ENCODE measurements at regions of chr1 and their contacts with region 1.

Region 1: GRCh38 chr1:33367485-33368405 is 46.8 kb upstream of the A3GALT2 start:
- DNase-seq: peak; percentile 92 to 94
- H3K4me3 ChIP-seq: no peak overlapping the region
- H3K27ac ChIP-seq: peak overlapping the region in 4 of 5 donors; percentile 7 to 84 (median 60)
- H3K4me1 ChIP-seq: peaks cover 24 to 57% (median 52%) of the 10 kb centered on the region in 4 donors
- H3K27me3 ChIP-seq: no peaks in the 10 kb centered on the region
- CTCF ChIP-seq: peak in 6 of 7 experiments; percentile 31 to 97 (median 95)
- EP300 ChIP-seq: no peak
- POLR2A ChIP-seq: no peak

Region 2: GRCh38 chr1:33295450-33296081 is 72.2 kb before region 1 on chr1:
- intact Hi-C with region 1: loop called (anchors 2 kb)
- DNase-seq: peak; percentile 93 to 95
- H3K4me3 ChIP-seq: no peak overlapping the region
- H3K27ac ChIP-seq: peak overlapping the region in 3 of 5 donors; percentile 15 to 67 (median 37)
- H3K4me1 ChIP-seq: peaks cover 7 to 47% (median 19%) of the 10 kb centered on the region in 4 donors
- H3K27me3 ChIP-seq: no peaks in the 10 kb centered on the region
- CTCF ChIP-seq: peak in 6 of 7 experiments; percentile 95 to 99 (median 98)
- EP300 ChIP-seq: no peak
- POLR2A ChIP-seq: no peak

Region 3: DNA sequence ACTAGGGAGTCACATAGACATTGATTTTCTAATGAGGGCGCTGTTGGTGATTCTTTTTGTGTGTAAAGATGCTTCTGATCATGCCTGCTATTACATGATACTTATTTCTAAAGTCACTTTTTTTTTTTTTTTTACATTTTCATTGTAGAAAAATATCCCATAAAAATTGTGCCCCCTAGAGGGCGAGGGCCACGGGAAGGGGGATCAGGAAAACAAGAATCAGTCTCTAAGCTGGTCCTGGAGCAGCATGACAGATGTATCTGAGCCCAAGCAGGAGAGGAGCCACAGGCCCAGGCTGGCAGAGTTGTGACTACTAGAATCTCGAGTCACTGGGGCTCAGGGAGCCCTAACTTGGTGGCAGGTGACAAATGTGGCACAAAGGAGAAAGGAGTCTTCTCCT is 132.8 kb after region 1 on chr1:
- intact Hi-C with region 1: no loop called
- DNase-seq: no peak
- H3K4me3 ChIP-seq: no peak overlapping the region
- H3K27ac ChIP-seq: no peak overlapping the region
- H3K4me1 ChIP-seq: no peaks in the 10 kb centered on the region
- H3K27me3 ChIP-seq: no peaks in the 10 kb centered on the region
- CTCF ChIP-seq: no peak
- EP300 ChIP-seq: no peak
- POLR2A ChIP-seq: no peak

Measured in stomach (tissue), 19 donors.